ENCODE measurements at regions of chr1 and their contacts with region 1.

Region 1: GRCh38 chr1:205396967-205397616 is 24.8 kb downstream of the LEMD1 start:
- DNase-seq: peak; percentile 8
- ATAC-seq: peak; percentile 65
- H3K4me3 ChIP-seq: no peak overlapping the region
- H3K27ac ChIP-seq: no peak overlapping the region
- H3K4me1 ChIP-seq: no peaks in the 10 kb centered on the region
- H3K27me3 ChIP-seq: no peaks in the 10 kb centered on the region
- CTCF ChIP-seq: peak; percentile 62 to 65 (median 65)
- EP300 ChIP-seq: no peak
- POLR2A ChIP-seq: no peak
- RAD21 ChIP-seq: peak; percentile 85

Region 2: GRCh38 chr1:205335643-205336091 is 61.4 kb before region 1 on chr1:
- CTCF ChIA-PET with region 1: interaction called, 13 read pairs
- POLR2A ChIA-PET with region 1: no interaction called
- RAD21 ChIA-PET with region 1: no interaction called
- SMC1A ChIA-PET with region 1: interaction called, 5 read pairs
- in situ Hi-C with region 1: no loop called
- intact Hi-C with region 1: no loop called
- DNase-seq: no peak
- ATAC-seq: peak; percentile 87
- H3K4me3 ChIP-seq: no peak overlapping the region
- H3K27ac ChIP-seq: no peak overlapping the region
- H3K4me1 ChIP-seq: peaks cover 6% of the 10 kb centered on the region; the same call in 1 of the 2 replicates
- H3K27me3 ChIP-seq: peaks cover 7 to 18% of the 10 kb centered on the region in 2 experiments
- CTCF ChIP-seq: peak; percentile 98 to 99 (median 99); a peak in 5 of 6 replicates
- EP300 ChIP-seq: no peak
- POLR2A ChIP-seq: no peak
- RAD21 ChIP-seq: peak; percentile 69

Region 3: GRCh38 chr1:205410581-205411298 is 13.6 kb after region 1 on chr1:
- CTCF ChIA-PET with region 1: interaction called, 13 read pairs
- POLR2A ChIA-PET with region 1: no interaction called
- RAD21 ChIA-PET with region 1: interaction called, 3 read pairs
- SMC1A ChIA-PET with region 1: interaction called, 8 read pairs
- in situ Hi-C with region 1: no loop called
- intact Hi-C with region 1: no loop called
- DNase-seq: no peak
- ATAC-seq: no peak
- H3K4me3 ChIP-seq: no peak overlapping the region
- H3K27ac ChIP-seq: no peak overlapping the region
- H3K4me1 ChIP-seq: no peaks in the 10 kb centered on the region
- H3K27me3 ChIP-seq: peaks cover 0 to 5% of the 10 kb centered on the region in 2 experiments; a peak in 3 of 4 replicates
- CTCF ChIP-seq: no peak
- EP300 ChIP-seq: no peak
- POLR2A ChIP-seq: no peak
- RAD21 ChIP-seq: no peak

Region 4: GRCh38 chr1:205422993-205423625 is 26.0 kb after region 1 on chr1:
- CTCF ChIA-PET with region 1: interaction called, 18 read pairs
- POLR2A ChIA-PET with region 1: no interaction called
- RAD21 ChIA-PET with region 1: interaction called, 4 read pairs
- SMC1A ChIA-PET with region 1: interaction called, 15 read pairs
- in situ Hi-C with region 1: no loop called
- intact Hi-C with region 1: no loop called
- DNase-seq: no peak
- ATAC-seq: no peak
- H3K4me3 ChIP-seq: no peak overlapping the region
- H3K27ac ChIP-seq: no peak overlapping the region
- H3K4me1 ChIP-seq: no peaks in the 10 kb centered on the region
- H3K27me3 ChIP-seq: peaks cover 6% of the 10 kb centered on the region in 2 experiments; a peak in 3 of 4 replicates
- CTCF ChIP-seq: peak in 1 of 3 experiments; percentile 26; a peak in 1 of 6 replicates
- EP300 ChIP-seq: no peak
- POLR2A ChIP-seq: no peak
- RAD21 ChIP-seq: 0 out of 2 replicates have a peak, but pooled peaks have one; percentile 3

Region 5: DNA sequence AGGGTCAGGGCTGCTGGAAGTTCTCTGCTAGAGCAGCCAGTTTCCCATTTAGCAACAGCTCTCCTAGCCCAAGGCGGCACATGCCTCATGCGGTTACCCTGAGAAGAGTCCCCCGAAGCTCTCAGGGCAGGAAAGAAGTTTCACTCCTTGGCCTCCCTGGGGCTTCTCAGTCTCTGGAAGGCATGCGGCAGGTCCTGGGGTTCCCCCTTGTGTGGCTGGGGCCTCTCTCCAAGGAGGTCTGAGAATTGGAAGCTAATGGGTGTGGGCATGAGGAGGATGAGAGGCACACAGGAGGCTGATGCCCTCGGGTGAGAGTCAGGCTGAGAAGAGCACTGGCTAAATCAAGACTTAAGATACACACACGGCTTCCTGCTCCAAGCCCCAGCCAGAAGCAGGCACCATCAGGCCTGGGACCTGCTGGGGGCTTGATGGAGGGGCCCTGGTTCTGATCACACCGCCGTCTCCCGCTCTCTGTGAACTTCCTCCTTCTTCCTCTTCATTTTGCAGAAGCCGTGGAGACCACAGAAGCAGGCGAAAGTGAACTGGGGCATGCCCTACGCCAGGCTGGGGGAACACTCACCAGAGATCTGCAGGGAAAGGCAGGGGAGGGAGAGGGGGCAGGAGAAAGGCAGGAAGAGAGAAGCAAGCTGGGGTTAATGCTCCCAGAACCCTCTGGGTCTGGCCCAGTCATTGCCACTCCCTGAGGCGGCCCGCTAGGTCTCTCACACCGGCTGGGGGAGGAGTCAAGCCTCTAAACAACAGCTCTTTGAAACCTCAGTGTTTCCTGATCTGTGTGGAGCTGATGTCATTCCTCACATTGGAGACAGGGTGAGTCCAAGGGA is 43.6 kb after region 1 on chr1:
- CTCF ChIA-PET with region 1: interaction called, 11 read pairs
- POLR2A ChIA-PET with region 1: no interaction called
- RAD21 ChIA-PET with region 1: interaction called, 3 read pairs
- SMC1A ChIA-PET with region 1: interaction called, 9 read pairs
- in situ Hi-C with region 1: no loop called
- intact Hi-C with region 1: no loop called
- DNase-seq: peak; percentile 47
- ATAC-seq: peak; percentile 92
- H3K4me3 ChIP-seq: peak overlapping the region; percentile 60; the same call in 1 of the 2 replicates
- H3K27ac ChIP-seq: peak overlapping the region; percentile 59
- H3K4me1 ChIP-seq: peaks cover 20% of the 10 kb centered on the region
- H3K27me3 ChIP-seq: no peaks in the 10 kb centered on the region; a peak in 1 of 4 replicates
- CTCF ChIP-seq: no peak
- EP300 ChIP-seq: no peak
- POLR2A ChIP-seq: peak; percentile 55; the same call in 1 of the 2 replicates
- RAD21 ChIP-seq: no peak

Region 6: DNA sequence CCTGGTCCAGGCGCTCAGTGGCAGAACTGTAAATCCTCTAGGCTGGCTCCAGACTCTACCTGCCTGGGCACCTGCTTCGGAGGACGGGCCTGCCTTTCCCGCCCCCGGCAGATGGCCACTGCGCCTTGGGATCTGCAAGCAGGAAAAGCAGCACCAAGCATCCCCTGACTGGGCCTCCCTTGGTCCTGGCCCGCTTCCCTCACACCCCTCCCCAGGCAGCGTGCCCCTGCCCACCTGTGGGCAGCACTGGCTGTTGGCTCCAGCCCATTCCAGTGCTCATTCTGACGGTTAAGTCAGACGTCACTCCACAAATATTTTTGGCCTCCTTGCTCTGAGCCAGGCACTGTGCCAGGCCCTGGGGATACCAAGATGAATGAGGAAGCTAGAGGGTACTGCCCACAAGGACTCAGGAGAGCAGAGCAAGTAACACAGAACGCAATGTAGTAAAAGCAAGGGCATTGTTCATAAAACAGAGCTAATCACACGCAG is 80.7 kb after region 1 on chr1:
- CTCF ChIA-PET with region 1: interaction called, 420 read pairs
- POLR2A ChIA-PET with region 1: no interaction called
- RAD21 ChIA-PET with region 1: interaction called, 214 read pairs
- SMC1A ChIA-PET with region 1: interaction called, 244 read pairs
- in situ Hi-C with region 1: no loop called
- intact Hi-C with region 1: no loop called
- DNase-seq: no peak
- ATAC-seq: no peak
- H3K4me3 ChIP-seq: no peak overlapping the region
- H3K27ac ChIP-seq: no peak overlapping the region
- H3K4me1 ChIP-seq: peaks cover 25% of the 10 kb centered on the region
- H3K27me3 ChIP-seq: peaks cover 0 to 2% of the 10 kb centered on the region in 2 experiments; a peak in 1 of 4 replicates
- CTCF ChIP-seq: no peak
- EP300 ChIP-seq: no peak
- POLR2A ChIP-seq: no peak
- RAD21 ChIP-seq: no peak

Measured in GM12878 (cell line).